GM12878 (cell line): ENCODE measurements at regions of chr15 and their contacts with region 1.

Region 1: DNA sequence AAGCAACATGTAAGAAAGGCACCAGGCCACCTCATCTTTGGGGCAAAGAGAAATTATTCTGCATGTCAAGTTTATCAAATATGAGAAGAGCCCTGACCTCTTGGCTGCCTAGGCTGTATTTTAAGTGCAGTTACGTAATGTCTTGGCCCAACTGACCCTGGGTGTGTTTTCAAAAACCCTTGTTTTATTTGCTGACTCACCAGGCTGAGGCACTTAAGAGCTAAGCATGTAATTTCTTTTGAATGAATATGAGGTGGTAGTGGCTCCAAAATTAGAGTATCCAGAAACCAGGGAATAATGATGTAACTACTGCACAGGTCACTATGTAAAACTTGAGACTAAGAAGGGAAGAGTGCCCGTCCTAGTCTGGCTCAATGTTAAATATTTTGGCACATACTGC is 24.3 kb downstream of the PGPEP1L start:
- DNase-seq: no peak
- ATAC-seq: no peak
- H3K4me3 ChIP-seq: no peak overlapping the region
- H3K27ac ChIP-seq: no peak overlapping the region
- H3K4me1 ChIP-seq: peaks cover 22% of the 10 kb centered on the region
- H3K27me3 ChIP-seq: no peaks in the 10 kb centered on the region
- CTCF ChIP-seq: no peak
- EP300 ChIP-seq: no peak
- POLR2A ChIP-seq: no peak
- RAD21 ChIP-seq: no peak

Region 2: GRCh38 chr15:98937413-98938104 is 45.8 kb before region 1 on chr15:
- CTCF ChIA-PET with region 1: interaction called, 3 read pairs
- POLR2A ChIA-PET with region 1: no interaction called
- RAD21 ChIA-PET with region 1: interaction called, 3 read pairs
- SMC1A ChIA-PET with region 1: interaction called, 11 read pairs
- in situ Hi-C with region 1: no loop called
- intact Hi-C with region 1: no loop called
- DNase-seq: peak; percentile 44
- ATAC-seq: peak; percentile 88
- H3K4me3 ChIP-seq: no peak overlapping the region; the same call in 1 of the 2 replicates
- H3K27ac ChIP-seq: peak overlapping the region; percentile 35
- H3K4me1 ChIP-seq: peaks cover 19% of the 10 kb centered on the region
- H3K27me3 ChIP-seq: no peaks in the 10 kb centered on the region
- CTCF ChIP-seq: no peak
- EP300 ChIP-seq: peak; percentile 28 to 47; a peak in 1 of 4 replicates
- POLR2A ChIP-seq: no peak
- RAD21 ChIP-seq: no peak

Region 3: DNA sequence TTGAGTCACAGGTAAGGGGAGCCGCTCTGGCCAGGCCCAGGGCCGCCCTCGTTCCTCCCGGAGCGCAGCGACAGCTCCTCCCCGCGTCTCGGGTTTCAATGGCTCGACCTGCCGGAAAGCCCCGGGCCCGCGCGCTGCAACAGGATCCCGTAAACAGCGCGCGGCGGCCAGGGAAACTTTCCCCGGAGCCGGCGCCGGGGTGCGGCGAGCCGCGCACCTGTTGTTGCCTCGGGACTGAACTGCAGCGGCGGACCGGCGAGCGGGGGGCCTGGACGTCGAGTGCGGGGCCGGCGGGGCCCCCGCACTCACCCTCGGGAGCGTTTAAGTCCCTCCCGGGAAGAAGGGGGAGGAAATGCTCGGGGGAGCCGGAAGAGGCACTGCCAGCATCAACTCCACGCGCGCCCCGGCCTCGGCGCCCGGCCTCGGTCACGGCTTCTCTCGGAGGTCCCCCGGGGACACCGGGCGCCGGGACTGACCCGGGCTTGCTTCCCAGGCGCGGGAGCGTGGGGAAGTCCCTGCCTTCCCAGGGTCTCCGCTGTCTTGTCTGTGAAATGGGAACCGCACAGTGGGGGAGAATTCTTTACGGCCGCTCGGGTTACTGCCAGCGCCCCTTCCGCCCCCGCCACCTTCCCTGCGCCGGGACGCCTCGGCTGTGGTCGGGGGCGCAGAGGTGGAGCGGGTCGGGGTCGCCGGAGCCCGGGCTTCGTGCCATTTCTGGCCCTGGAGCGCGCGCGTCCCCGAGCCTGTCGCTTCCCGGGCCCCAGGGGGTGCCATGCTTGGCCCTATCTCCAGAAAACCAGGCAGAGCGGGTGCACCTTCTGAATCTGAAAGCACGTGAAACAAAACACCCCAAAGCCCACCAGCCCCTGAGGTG is 31.7 kb after region 1 on chr15:
- CTCF ChIA-PET with region 1: interaction called, 5 read pairs
- POLR2A ChIA-PET with region 1: interaction called, 5 read pairs
- RAD21 ChIA-PET with region 1: interaction called, 4 read pairs
- SMC1A ChIA-PET with region 1: interaction called, 4 read pairs
- in situ Hi-C with region 1: no loop called
- intact Hi-C with region 1: loop called (anchors 2 kb)
- DNase-seq: no peak
- ATAC-seq: peak; percentile 91
- H3K4me3 ChIP-seq: peak overlapping the region; percentile 68
- H3K27ac ChIP-seq: peak overlapping the region; percentile 89
- H3K4me1 ChIP-seq: no peaks in the 10 kb centered on the region; the same call in 1 of the 2 replicates
- H3K27me3 ChIP-seq: no peaks in the 10 kb centered on the region
- CTCF ChIP-seq: no peak
- EP300 ChIP-seq: no peak
- POLR2A ChIP-seq: peak; percentile 45
- RAD21 ChIP-seq: no peak

Region 4: DNA sequence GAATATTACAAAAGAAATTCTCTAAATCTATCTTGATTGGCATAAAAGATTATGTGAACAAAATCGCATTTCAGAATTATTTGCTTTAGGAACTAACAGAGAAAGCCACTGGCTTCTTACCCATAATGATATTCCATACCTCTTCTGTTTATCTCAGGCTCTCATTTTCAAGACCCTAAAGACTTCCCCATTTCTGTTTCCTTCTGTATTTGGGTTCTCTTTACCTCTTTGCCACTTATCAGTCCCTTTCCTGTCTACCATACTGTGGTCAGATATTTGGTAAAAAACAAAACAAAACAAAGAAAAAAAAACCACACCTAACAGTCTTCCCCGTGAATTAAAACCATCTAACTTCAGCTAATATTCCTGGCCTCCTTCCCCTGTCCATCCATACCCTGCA is 376.4 kb after region 1 on chr15:
- CTCF ChIA-PET with region 1: no interaction called
- POLR2A ChIA-PET with region 1: no interaction called
- RAD21 ChIA-PET with region 1: no interaction called
- SMC1A ChIA-PET with region 1: no interaction called
- in situ Hi-C with region 1: no loop called
- intact Hi-C with region 1: no loop called
- DNase-seq: no peak
- ATAC-seq: no peak
- H3K4me3 ChIP-seq: no peak overlapping the region
- H3K27ac ChIP-seq: no peak overlapping the region
- H3K4me1 ChIP-seq: peaks cover 3% of the 10 kb centered on the region; the same call in 1 of the 2 replicates
- H3K27me3 ChIP-seq: no peaks in the 10 kb centered on the region
- CTCF ChIP-seq: no peak
- EP300 ChIP-seq: no peak
- POLR2A ChIP-seq: no peak
- RAD21 ChIP-seq: no peak